Right ventricle myocardium superior (tissue), 1 donor: ENCODE measurements at regions of chr16 and their contacts with region 1.

Region 1: GRCh38 chr16:8567750-8568617 is 22.3 kb downstream of the TMEM114 start:
- DNase-seq: peak; percentile 67
- ATAC-seq: peak; percentile 84

Region 2: GRCh38 chr16:8751481-8752311 is 183.7 kb after region 1 on chr16:
- intact Hi-C with region 1: no loop called
- DNase-seq: no peak
- ATAC-seq: peak; percentile 66

Region 3: GRCh38 chr16:8797364-8798173 is 229.6 kb after region 1 on chr16 and contains the starts of genes PMM2 and TMEM186:
- intact Hi-C with region 1: loop called (anchors 10 kb)
- DNase-seq: peak; percentile 97
- ATAC-seq: peak; percentile 99
- total RNA-seq, gene PMM2: 14.9 TPM
- total RNA-seq, gene TMEM186: 12.7 TPM

Region 4: DNA sequence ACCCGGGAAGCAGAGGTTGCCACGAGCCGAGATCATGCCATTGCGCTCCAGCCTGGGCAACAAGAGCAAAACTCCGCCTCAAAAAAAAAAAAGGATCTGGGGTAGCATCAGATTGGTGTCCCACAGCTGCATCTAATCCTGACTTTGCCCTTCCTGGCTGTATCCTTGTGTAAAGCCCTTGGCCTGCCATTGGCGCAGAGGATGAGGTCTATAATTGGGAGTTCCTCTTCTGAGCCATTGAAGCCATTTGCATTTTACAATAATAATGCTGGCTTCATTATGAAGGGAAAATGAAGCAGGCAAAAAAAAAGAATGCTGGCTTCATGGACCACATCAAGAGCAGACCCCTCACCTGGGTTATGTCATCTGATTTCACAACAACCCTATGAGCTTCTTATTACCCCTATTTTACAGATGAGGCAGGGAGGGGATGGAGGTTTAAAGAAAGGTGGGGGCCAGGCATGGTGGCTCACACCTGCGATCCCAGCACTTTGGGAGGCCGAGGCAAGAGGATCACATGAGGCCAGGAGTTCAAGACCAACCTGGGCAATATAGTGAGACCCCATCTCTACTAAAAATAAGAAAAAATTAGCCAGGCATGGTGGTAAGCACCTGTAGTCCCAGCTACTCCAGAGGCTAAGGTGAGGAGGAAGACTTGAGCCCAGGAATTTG is 313.0 kb after region 1 on chr16:
- intact Hi-C with region 1: loop called (anchors 5 kb)
- DNase-seq: peak; percentile 2
- ATAC-seq: no peak